ENCODE measurements at regions of chrX and their contacts with region 1.

Region 1: DNA sequence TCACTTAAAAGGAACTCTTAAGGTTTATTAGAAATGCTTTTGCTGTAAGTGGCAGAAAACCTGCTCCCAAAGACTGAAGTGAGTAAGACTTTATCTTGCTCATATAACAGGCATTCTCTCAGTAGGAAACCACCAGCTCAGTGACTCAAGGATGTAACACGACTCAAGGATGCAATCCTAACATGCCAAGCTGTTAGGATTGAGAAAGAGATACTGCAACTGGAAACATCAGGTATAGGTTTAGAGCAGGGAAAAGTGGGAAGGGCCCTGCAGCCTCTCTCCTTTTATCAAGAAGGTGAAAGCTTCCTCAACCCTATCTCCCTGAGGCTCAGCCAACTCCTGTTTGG is 11.9 kb upstream of the SLC9A7 start:
- DNase-seq: no peak

Region 2: DNA sequence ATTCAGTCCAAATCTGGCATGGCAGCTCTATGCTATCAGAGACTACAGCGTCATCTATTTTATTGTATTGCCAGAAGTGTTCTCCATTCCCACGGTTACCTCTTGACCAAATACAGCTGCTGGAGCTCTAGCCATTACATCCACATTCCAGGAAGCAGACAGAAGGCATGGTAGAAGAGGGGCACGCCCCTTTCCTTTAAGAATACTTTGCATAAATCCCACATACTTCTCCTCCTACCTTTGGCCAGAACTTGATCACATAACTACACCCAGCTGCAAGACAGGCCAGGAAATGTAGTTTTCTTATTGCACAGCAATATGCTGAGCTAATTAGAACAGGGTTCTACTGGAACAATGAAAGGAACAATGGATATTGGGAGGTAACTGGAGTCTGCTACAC is 26.8 kb before region 1 on chrX:
- CTCF ChIA-PET with region 1: interaction called, 10 read pairs
- POLR2A ChIA-PET with region 1: no interaction called
- DNase-seq: no peak